ENCODE measurements at regions of chr1 and their contacts with region 1.

Region 1: DNA sequence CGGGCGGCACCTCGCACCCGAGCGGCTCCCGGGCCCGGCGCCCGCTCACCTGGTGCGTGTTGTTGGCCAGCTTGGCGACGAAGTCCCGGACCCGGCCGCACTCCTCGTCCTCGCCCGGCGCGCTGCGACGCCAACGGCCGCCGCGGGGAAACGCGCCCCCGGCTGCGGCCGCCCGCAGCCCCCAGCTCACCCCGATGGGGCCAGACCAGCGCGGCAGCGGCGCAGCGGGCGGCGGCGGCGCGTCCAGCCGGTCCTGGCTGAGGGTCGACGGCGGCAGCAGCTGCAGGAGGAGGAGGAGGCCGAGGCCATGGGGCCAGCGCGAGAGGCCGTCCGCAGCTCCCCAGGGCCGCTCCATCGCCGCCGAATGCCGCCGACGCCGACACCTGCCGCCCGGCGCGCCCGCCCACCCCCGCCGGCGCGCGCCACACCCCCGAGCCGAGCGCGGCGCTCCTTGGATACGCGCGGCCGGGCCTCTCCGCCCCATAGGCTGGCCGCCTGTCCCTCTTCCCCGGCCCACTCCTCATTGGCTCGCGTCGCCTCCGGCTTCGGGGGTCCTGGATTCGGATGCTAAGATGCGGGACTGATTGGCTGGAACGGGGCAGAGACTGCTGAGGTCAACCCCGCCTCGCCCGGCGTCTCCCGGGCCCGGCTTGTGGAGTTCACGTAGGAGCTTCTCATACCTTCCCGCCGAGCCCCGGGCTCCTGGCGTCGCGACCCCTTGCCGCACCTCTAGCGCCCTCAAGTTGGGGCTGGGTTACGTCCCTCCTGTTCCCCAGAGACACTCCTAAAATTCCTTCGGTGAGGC is at the start of gene SORT1:
- DNase-seq: peak; percentile 85 to 94 (median 93)
- ATAC-seq: peak; percentile 95 to 97
- H3K4me3 ChIP-seq: peak within 1 kb of the TSS; percentile 91
- H3K27ac ChIP-seq: peak within 1 kb of the TSS; percentile 61
- H3K4me1 ChIP-seq: peaks cover under 1% of the 10 kb centered on the region
- H3K27me3 ChIP-seq: no peaks in the 10 kb centered on the region
- total RNA-seq, gene SORT1: 119 to 170 (median 138) TPM

Region 2: GRCh38 chr1:109208836-109209463 is 188.8 kb before region 1 on chr1:
- intact Hi-C with region 1: no loop called
- DNase-seq: no peak
- ATAC-seq: no peak
- H3K4me3 ChIP-seq: no peak overlapping the region
- H3K27ac ChIP-seq: no peak overlapping the region
- H3K4me1 ChIP-seq: no peaks in the 10 kb centered on the region
- H3K27me3 ChIP-seq: no peaks in the 10 kb centered on the region

Region 3: DNA sequence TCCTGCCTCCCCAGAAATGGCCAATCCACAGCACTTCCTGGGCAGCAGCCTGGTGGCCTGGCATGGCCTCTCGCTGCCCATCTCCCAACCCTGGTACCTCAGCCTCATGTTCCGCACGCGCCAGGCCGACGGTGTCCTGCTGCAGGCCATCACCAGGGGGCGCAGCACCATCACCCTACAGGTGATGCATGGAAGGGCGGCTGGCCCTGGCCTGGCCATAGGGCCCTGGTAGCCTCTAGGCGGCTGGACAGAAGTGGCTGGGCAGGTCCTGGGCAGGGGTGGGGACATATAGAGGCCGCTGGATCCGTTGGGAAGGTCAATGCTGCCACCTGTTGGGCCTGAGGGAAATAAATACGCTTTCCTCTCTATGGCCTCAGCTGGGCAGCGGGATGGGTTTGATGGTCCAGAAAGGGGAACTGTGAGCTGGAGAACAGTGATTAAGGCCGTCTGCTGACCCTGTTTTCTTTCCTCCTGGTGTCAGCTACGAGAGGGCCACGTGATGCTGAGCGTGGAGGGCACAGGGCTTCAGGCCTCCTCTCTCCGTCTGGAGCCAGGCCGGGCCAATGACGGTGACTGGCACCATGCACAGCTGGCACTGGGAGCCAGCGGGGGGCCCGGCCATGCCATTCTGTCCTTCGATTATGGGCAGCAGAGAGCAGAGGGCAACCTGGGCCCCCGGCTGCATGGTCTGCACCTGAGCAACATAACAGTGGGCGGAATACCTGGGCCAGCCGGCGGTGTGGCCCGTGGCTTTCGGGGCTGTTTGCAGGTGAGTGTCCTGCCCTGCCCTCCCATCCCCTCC is 133.9 kb before region 1 on chr1:
- intact Hi-C with region 1: loop called in 2 of 4 experiments (anchors 1 to 5 kb)
- DNase-seq: peak; percentile 81 to 94 (median 93)
- ATAC-seq: peak; percentile 86 to 92
- H3K4me3 ChIP-seq: no peak overlapping the region
- H3K27ac ChIP-seq: no peak overlapping the region
- H3K4me1 ChIP-seq: no peaks in the 10 kb centered on the region
- H3K27me3 ChIP-seq: no peaks in the 10 kb centered on the region

Region 4: DNA sequence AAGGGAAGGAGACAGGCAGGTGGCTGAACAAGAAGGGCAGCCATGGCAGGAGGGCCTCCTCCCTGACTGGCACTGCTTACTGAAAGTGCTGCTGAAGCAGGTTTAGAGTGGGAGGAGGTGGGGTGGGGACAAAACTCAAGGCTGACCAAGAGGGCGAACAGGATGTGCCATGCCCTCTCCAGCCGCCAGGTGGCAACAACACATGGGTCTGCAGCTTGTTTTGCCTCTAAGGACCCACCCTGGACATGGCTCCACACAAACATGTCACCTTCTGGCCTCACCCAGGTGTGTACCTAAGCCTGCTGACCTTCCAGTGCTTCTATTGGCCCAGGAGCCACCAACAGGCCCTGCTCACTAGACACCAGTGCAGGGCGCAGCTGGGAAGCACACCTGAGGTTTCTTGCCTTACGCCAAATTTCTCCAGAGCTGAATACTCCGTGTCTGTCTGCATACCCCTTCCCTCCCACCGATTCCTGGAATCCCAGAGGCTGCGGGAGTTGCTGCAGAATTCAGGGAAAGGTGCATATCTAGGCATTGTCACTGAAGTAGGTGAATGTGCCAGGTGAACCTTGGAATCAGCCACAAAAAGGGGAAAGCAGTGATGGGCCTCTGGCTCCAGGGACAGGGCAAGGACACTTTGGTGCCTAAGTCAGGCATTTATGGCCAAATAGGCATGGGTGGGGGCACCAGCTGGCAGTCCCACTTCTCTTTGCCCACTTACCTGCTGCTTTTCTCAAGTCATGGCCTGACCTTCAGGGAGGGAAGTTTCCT is 120.1 kb before region 1 on chr1:
- intact Hi-C with region 1: loop called (anchors 2 to 5 kb)
- DNase-seq: peak; percentile 76 to 92 (median 92)
- ATAC-seq: peak; percentile 72 to 78
- H3K4me3 ChIP-seq: no peak overlapping the region
- H3K27ac ChIP-seq: no peak overlapping the region
- H3K4me1 ChIP-seq: peaks cover 13% of the 10 kb centered on the region
- H3K27me3 ChIP-seq: no peaks in the 10 kb centered on the region

Region 5: GRCh38 chr1:109307274-109308021 is 90.3 kb before region 1 on chr1:
- intact Hi-C with region 1: loop called in 1 of 4 experiments (anchors 10 kb)
- DNase-seq: peak; percentile 68 to 89 (median 86)
- ATAC-seq: peak; percentile 86 to 89
- H3K4me3 ChIP-seq: no peak overlapping the region
- H3K27ac ChIP-seq: peak overlapping the region; percentile 90
- H3K4me1 ChIP-seq: peaks cover 10% of the 10 kb centered on the region
- H3K27me3 ChIP-seq: no peaks in the 10 kb centered on the region

Region 6: GRCh38 chr1:109341944-109342930 is 55.5 kb before region 1 on chr1:
- intact Hi-C with region 1: loop called in 1 of 4 experiments (anchors 10 kb)
- DNase-seq: peak in 1 of 3 donors; percentile 45
- ATAC-seq: peak in 1 of 2 donors; percentile 29
- H3K4me3 ChIP-seq: no peak overlapping the region
- H3K27ac ChIP-seq: no peak overlapping the region
- H3K4me1 ChIP-seq: peaks cover 2% of the 10 kb centered on the region
- H3K27me3 ChIP-seq: no peaks in the 10 kb centered on the region

Region 7: GRCh38 chr1:109446085-109446695 is 48.5 kb after region 1 on chr1:
- intact Hi-C with region 1: no loop called
- DNase-seq: no peak
- ATAC-seq: no peak
- H3K4me3 ChIP-seq: no peak overlapping the region
- H3K27ac ChIP-seq: no peak overlapping the region
- H3K4me1 ChIP-seq: no peaks in the 10 kb centered on the region
- H3K27me3 ChIP-seq: no peaks in the 10 kb centered on the region